ENCODE measurements at regions of chr3 and their contacts with region 1.

Region 1: GRCh38 chr3:115819785-115820384 is 196.6 kb downstream of the GAP43 start:
- DNase-seq: peak; percentile 93
- ATAC-seq: peak; percentile 59
- H3K4me3 ChIP-seq: no peak overlapping the region
- H3K27ac ChIP-seq: no peak overlapping the region
- H3K4me1 ChIP-seq: peaks cover 24% of the 10 kb centered on the region
- H3K27me3 ChIP-seq: no peaks in the 10 kb centered on the region
- CTCF ChIP-seq: peak; percentile 100

Region 2: GRCh38 chr3:115217678-115218451 is 602.0 kb before region 1 on chr3:
- CTCF ChIA-PET with region 1: interaction called, 5 read pairs
- POLR2A ChIA-PET with region 1: no interaction called
- intact Hi-C with region 1: loop called (anchors 1 kb)
- DNase-seq: peak; percentile 72
- ATAC-seq: peak; percentile 86
- H3K4me3 ChIP-seq: no peak overlapping the region; the same call in 1 of the 2 replicates
- H3K27ac ChIP-seq: peak overlapping the region; percentile 17
- H3K4me1 ChIP-seq: peaks cover 10% of the 10 kb centered on the region; the same call in 1 of the 2 replicates
- H3K27me3 ChIP-seq: no peaks in the 10 kb centered on the region
- CTCF ChIP-seq: peak; percentile 95

Region 3: DNA sequence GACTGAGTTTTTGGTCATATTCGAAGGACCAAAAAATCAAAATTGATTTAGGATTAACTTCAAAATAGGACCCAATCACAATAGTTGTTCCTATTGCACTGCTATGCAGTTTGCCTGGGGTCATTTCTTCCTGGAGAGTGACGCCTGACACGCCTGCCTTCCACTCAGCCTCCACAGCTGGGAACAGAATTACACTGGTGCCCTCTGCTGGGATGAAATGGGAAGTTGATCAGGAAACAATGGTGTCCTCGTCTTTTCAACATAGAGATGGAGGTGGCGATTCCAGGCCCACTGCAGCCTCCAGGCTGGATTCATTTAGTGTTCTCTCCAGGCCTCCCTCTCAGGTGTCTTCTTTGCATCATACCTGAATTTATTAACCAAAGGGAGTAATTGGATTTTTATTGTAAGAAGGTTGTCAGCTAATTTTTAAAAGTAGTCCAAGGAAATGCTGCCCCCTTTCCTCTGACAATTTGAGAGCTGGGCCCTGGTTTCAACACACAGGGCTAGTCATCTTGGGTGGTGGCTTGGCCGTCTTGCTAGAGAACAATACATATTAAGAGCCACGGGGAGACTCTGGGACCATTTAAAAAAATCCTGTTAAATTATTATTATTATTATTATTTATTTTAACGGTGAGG is 126.9 kb before region 1 on chr3:
- CTCF ChIA-PET with region 1: interaction called, 5 read pairs
- POLR2A ChIA-PET with region 1: no interaction called
- intact Hi-C with region 1: loop called (anchors 1 kb)
- DNase-seq: peak; percentile 90
- ATAC-seq: peak; percentile 96
- H3K4me3 ChIP-seq: no peak overlapping the region
- H3K27ac ChIP-seq: no peak overlapping the region
- H3K4me1 ChIP-seq: no peaks in the 10 kb centered on the region
- H3K27me3 ChIP-seq: no peaks in the 10 kb centered on the region
- CTCF ChIP-seq: peak; percentile 94

Region 4: GRCh38 chr3:115876876-115877614 is 57.2 kb after region 1 on chr3:
- CTCF ChIA-PET with region 1: no interaction called
- POLR2A ChIA-PET with region 1: no interaction called
- intact Hi-C with region 1: loop called (anchors 2 kb)
- DNase-seq: peak; percentile 38
- ATAC-seq: peak; percentile 90
- H3K4me3 ChIP-seq: no peak overlapping the region
- H3K27ac ChIP-seq: no peak overlapping the region
- H3K4me1 ChIP-seq: peaks cover 9% of the 10 kb centered on the region; the same call in 1 of the 2 replicates
- H3K27me3 ChIP-seq: no peaks in the 10 kb centered on the region
- CTCF ChIP-seq: no peak

Region 5: DNA sequence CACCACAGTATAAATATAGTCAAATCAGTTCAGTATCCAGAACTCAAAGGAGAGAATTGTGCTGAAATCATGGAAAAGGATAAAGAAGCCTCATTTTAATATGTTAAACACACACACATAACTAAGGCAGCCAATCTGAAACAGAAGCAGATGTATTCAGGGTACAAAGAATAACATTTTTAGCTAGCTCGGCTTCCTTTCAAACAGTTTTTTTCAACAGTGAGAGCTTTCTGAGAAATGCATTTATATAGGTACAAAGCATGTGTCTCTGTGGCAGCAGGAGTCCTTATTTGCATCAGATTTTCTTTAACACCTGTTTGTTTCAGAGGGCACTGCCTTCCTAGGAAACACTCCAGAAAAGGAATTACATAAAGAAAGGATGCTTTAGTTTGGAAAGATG is 79.1 kb after region 1 on chr3:
- CTCF ChIA-PET with region 1: no interaction called
- POLR2A ChIA-PET with region 1: no interaction called
- intact Hi-C with region 1: no loop called
- DNase-seq: no peak
- ATAC-seq: no peak
- H3K4me3 ChIP-seq: no peak overlapping the region
- H3K27ac ChIP-seq: no peak overlapping the region
- H3K4me1 ChIP-seq: no peaks in the 10 kb centered on the region
- H3K27me3 ChIP-seq: no peaks in the 10 kb centered on the region
- CTCF ChIP-seq: no peak

Region 6: GRCh38 chr3:116129230-116129946 is 309.5 kb after region 1 on chr3:
- CTCF ChIA-PET with region 1: no interaction called
- POLR2A ChIA-PET with region 1: no interaction called
- intact Hi-C with region 1: loop called (anchors 5 kb)
- DNase-seq: peak; percentile 48
- ATAC-seq: peak; percentile 88
- H3K4me3 ChIP-seq: no peak overlapping the region
- H3K27ac ChIP-seq: no peak overlapping the region
- H3K4me1 ChIP-seq: no peaks in the 10 kb centered on the region
- H3K27me3 ChIP-seq: no peaks in the 10 kb centered on the region
- CTCF ChIP-seq: no peak